ENCODE measurements at regions of chr14 and their contacts with region 1.

Region 1: GRCh38 chr14:58637391-58638230 is at the start of gene DACT1:
- DNase-seq: no peak
- H3K4me3 Mint-ChIP-seq: no peak within 1 kb of the TSS
- H3K27ac Mint-ChIP-seq: no peak within 1 kb of the TSS
- H3K4me1 Mint-ChIP-seq: no peaks in the 10 kb centered on the region
- H3K27me3 Mint-ChIP-seq: peaks cover 66% of the 10 kb centered on the region
- CTCF ChIP-seq: no peak
- total RNA-seq, gene DACT1: not detected in 2 replicates

Region 2: GRCh38 chr14:58650857-58651256 is 13.2 kb after region 1 on chr14:
- CTCF ChIA-PET with region 1: interaction called, 16 read pairs
- POLR2A ChIA-PET with region 1: no interaction called
- intact Hi-C with region 1: no loop called
- DNase-seq: no peak
- H3K4me3 Mint-ChIP-seq: no peak overlapping the region
- H3K27ac Mint-ChIP-seq: no peak overlapping the region
- H3K4me1 Mint-ChIP-seq: no peaks in the 10 kb centered on the region
- H3K27me3 Mint-ChIP-seq: peaks cover 39% of the 10 kb centered on the region
- CTCF ChIP-seq: no peak

Region 3: DNA sequence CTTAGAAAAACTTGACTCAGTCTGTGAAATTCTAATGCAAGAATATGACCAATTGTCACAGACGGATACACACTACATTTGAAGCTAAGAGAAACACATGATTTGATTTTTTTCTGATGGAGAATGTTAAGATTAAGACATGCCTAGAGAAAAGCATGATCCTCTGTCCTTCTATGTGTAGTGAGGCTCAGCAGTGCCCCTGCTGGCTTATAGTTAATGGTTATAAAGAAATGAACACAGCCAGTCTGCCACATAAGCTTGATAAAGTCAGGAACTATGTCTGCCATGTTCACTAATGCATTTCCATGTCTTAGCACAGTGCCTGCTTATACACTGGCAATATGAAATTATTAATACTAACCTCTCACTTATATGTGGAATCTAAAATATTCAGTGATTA is 382.8 kb after region 1 on chr14:
- CTCF ChIA-PET with region 1: interaction called, 6 read pairs
- POLR2A ChIA-PET with region 1: no interaction called
- intact Hi-C with region 1: loop called (anchors 1 kb)
- DNase-seq: peak; percentile 41
- H3K4me3 Mint-ChIP-seq: no peak overlapping the region
- H3K27ac Mint-ChIP-seq: no peak overlapping the region
- H3K4me1 Mint-ChIP-seq: no peaks in the 10 kb centered on the region
- H3K27me3 Mint-ChIP-seq: peaks cover 29% of the 10 kb centered on the region
- CTCF ChIP-seq: peak; percentile 42

Region 4: DNA sequence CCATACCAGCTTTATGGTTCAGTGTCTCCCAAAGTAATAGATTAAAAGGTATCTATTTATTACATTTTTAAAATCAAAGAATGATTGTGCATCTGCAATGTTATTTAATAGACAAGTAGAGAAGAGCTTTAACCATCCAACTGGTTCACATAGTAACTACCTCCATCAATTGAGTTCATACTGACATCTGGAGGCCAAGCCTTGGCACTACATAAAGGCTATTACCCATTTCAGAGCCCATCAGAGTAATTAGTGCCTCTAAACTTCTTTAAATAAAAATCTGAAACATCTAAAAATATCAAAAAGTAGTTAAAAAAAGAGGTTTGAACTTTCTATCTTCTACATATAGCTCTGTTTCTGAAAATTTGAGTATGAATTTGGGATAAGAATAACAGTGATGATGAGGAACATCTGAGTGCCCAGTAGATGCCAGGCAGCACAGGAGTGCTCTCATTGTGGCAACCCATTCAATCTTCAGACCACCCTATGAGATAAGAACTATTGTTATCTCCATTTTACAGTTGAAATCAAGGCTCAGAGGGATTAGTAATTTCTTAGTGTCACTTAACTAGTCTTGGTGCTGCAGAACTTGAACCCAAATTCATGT is 417.9 kb after region 1 on chr14:
- CTCF ChIA-PET with region 1: interaction called, 5 read pairs
- POLR2A ChIA-PET with region 1: no interaction called
- intact Hi-C with region 1: loop called (anchors 1 kb)
- DNase-seq: peak; percentile 28
- H3K4me3 Mint-ChIP-seq: no peak overlapping the region
- H3K27ac Mint-ChIP-seq: no peak overlapping the region
- H3K4me1 Mint-ChIP-seq: no peaks in the 10 kb centered on the region
- H3K27me3 Mint-ChIP-seq: peaks cover 29% of the 10 kb centered on the region
- CTCF ChIP-seq: peak; percentile 46

Measured in MCF 10A (cell line).